Panc1 (cell line): ENCODE measurements at regions of chr13 and their contacts with region 1.

Region 1: DNA sequence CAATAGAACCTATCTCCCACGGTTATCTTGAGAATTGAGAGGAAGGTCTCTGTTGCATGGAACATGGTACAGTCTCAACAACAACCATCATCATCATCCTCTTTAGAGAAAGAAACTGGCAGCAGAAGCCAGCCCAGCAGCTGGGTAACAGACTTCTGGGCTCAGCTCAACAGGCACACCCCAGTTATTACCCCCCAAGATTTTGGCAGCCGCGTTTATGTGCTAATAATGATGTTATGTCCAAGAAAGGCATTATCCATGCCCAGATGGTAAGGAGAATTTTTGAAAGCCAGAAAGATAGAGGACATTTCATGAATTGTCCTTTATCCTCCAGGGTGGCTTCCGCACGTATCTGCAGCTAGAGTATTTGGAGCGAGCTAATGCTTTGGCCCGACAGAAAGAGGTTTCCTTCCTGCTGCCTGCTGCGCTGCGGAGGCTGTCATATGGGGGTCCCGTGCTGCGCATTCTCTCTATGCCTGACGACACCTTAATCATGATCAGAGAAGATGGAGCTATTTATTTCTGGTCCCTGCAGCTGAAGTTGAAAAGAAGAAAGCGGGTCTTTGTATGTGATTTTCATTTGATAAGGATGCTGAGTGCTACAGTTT is 89.9 kb downstream of the TEX26 start:
- DNase-seq: no peak
- ATAC-seq: no peak
- H3K4me3 ChIP-seq: no peak overlapping the region
- H3K27ac ChIP-seq: no peak overlapping the region
- H3K4me1 ChIP-seq: no peaks in the 10 kb centered on the region
- H3K27me3 ChIP-seq: no peaks in the 10 kb centered on the region
- CTCF ChIP-seq: no peak

Region 2: GRCh38 chr13:30659980-30660379 is 362.4 kb before region 1 on chr13:
- CTCF ChIA-PET with region 1: no interaction called
- POLR2A ChIA-PET with region 1: interaction called, 12 read pairs
- in situ Hi-C with region 1: no loop called
- intact Hi-C with region 1: no loop called
- DNase-seq: no peak
- ATAC-seq: peak; percentile 72
- H3K4me3 ChIP-seq: no peak overlapping the region
- H3K27ac ChIP-seq: no peak overlapping the region
- H3K4me1 ChIP-seq: 0 out of 2 replicates have a peak, but pooled peaks cover 8% of the 10 kb centered on the region
- H3K27me3 ChIP-seq: no peaks in the 10 kb centered on the region
- CTCF ChIP-seq: no peak

Region 3: GRCh38 chr13:30998136-30999088 is 24.0 kb before region 1 on chr13:
- CTCF ChIA-PET with region 1: no interaction called
- POLR2A ChIA-PET with region 1: no interaction called
- in situ Hi-C with region 1: no loop called
- intact Hi-C with region 1: no loop called
- DNase-seq: no peak
- ATAC-seq: no peak
- H3K4me3 ChIP-seq: no peak overlapping the region
- H3K27ac ChIP-seq: no peak overlapping the region
- H3K4me1 ChIP-seq: no peaks in the 10 kb centered on the region
- H3K27me3 ChIP-seq: no peaks in the 10 kb centered on the region
- CTCF ChIP-seq: no peak